Mammary epithelial cell (primary cell): ENCODE measurements at regions of chr13 and their contacts with region 1.

Region 1: DNA sequence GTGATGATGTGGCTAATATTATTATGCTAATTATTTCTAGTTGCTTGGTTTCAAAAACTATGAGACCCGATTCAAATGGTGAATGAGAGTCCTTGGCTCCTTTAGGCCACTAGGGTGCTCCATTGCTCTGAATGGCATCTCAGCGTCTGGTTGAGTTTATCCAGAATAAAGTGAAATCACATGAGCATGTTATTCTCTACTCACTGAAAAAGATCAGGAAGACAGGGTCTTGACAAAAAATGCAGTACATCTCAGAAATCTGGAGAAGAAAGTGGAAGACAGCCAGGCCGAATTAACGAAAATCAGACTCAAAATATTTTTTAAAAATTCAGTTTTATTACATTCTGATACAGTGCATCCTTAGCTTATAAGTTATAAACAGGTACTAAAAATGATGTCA is 516.2 kb downstream of the MYO16 start:
- DNase-seq: peak; percentile 72
- H3K4me3 ChIP-seq: no peak overlapping the region
- H3K27ac ChIP-seq: peak overlapping the region; percentile 99
- H3K4me1 ChIP-seq: peaks cover 38% of the 10 kb centered on the region
- H3K27me3 ChIP-seq: no peaks in the 10 kb centered on the region
- CTCF ChIP-seq: peak; percentile 93 to 98

Region 2: GRCh38 chr13:108915634-108916512 is 229.8 kb before region 1 on chr13:
- CTCF ChIA-PET with region 1: no interaction called
- dilution Hi-C with region 1: no loop called
- in situ Hi-C with region 1: no loop called
- intact Hi-C with region 1: loop called (anchors 2 kb)
- DNase-seq: peak; percentile 94
- H3K4me3 ChIP-seq: no peak overlapping the region
- H3K27ac ChIP-seq: peak overlapping the region; percentile 50
- H3K4me1 ChIP-seq: peaks cover 25% of the 10 kb centered on the region
- H3K27me3 ChIP-seq: no peaks in the 10 kb centered on the region
- CTCF ChIP-seq: no peak

Region 3: GRCh38 chr13:109344552-109345157 is 199.0 kb after region 1 on chr13:
- CTCF ChIA-PET with region 1: no interaction called
- dilution Hi-C with region 1: no loop called
- in situ Hi-C with region 1: no loop called
- intact Hi-C with region 1: loop called (anchors 5 kb)
- DNase-seq: peak; percentile 27
- H3K4me3 ChIP-seq: no peak overlapping the region
- H3K27ac ChIP-seq: no peak overlapping the region
- H3K4me1 ChIP-seq: peaks cover 26% of the 10 kb centered on the region
- H3K27me3 ChIP-seq: no peaks in the 10 kb centered on the region
- CTCF ChIP-seq: no peak

Region 4: DNA sequence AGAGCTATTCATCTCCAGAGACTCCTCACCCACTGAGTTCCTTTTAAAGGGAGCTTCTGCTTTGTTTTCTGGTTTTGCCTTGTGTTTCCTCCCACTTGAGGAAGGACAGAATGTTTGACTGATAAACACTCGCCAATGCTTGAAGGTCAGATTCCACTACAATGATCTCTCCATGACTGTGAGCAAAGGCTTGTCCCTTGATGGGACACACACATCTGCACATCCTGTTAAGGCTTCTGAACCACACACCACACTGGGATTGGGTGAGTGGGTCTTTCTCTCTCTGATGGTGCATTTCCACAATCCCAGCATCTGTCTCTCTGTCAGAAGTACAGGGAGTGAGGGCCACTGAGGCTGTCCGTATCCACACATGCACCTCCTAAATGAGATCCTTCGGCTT is 395.4 kb after region 1 on chr13:
- CTCF ChIA-PET with region 1: no interaction called
- dilution Hi-C with region 1: no loop called
- in situ Hi-C with region 1: no loop called
- intact Hi-C with region 1: no loop called
- DNase-seq: no peak
- H3K4me3 ChIP-seq: no peak overlapping the region
- H3K27ac ChIP-seq: no peak overlapping the region
- H3K4me1 ChIP-seq: no peaks in the 10 kb centered on the region
- H3K27me3 ChIP-seq: peaks cover 5% of the 10 kb centered on the region
- CTCF ChIP-seq: no peak

Region 5: DNA sequence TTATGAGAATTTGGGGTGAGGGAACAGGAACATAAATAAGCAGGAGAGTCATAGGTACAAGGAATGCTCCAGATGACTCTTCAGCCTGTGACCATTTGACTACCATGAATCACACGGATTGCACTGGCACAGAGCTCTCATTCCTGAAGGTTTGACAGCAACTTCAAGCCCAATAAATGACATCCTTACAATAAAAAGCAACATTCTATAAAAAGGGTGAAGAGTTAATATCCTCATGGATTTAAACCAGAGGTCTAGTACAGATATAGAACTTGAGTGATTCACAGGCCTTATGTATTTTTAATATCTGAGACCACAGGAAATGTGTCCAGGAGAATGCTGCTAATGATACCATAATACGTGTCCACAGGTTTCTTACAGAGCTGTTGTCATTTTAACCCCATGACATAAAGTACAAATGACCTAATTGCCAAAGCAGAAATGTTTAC is 482.6 kb after region 1 on chr13:
- CTCF ChIA-PET with region 1: no interaction called
- dilution Hi-C with region 1: no loop called
- in situ Hi-C with region 1: no loop called
- intact Hi-C with region 1: loop called (anchors 10 kb)
- DNase-seq: peak; percentile 74
- H3K4me3 ChIP-seq: no peak overlapping the region
- H3K27ac ChIP-seq: no peak overlapping the region
- H3K4me1 ChIP-seq: peaks cover 5% of the 10 kb centered on the region
- H3K27me3 ChIP-seq: no peaks in the 10 kb centered on the region
- CTCF ChIP-seq: no peak

Region 6: DNA sequence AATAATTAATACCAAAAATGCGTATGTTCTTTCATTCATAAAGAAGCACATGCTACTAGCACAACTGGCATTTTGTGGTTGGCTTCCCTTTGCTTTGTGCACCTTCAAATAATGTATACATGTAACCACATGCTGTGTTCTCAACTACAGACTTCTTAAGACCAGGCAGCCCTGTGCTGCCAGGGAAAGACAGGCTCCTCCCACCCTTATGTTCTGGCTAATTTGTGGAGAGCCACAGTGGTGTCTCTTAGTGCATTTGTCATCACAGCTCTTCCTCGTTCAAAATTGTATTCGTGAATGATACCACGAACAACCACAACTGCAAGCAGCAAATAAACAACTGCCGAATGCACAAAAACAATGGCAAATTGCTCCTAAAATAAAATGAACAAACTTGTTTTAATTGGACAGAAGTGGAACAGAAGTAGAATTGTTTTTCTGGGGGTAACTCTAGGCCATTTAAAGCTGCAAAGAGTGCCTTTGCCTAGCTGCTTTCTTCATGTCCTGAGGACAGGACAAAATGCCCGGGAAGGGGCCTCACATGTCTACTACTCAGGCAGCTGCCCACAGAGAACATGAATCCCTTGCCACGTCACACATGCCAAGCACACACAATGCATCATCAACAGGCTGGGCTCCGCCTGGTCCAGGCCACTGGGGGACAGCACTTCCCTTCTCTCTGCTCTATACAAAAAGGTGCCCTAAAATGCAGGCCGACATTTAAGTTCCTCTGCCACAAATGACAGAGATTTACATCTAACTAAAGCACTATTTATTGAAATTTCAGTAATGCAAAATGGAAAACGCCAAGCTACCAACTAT is 619.0 kb after region 1 on chr13:
- CTCF ChIA-PET with region 1: no interaction called
- dilution Hi-C with region 1: no loop called
- in situ Hi-C with region 1: loop called in 1 of 2 experiments (anchors 25 kb)
- intact Hi-C with region 1: loop called (anchors 5 kb)
- DNase-seq: peak; percentile 59
- H3K4me3 ChIP-seq: no peak overlapping the region
- H3K27ac ChIP-seq: no peak overlapping the region
- H3K4me1 ChIP-seq: peaks cover 45% of the 10 kb centered on the region
- H3K27me3 ChIP-seq: no peaks in the 10 kb centered on the region
- CTCF ChIP-seq: peak; percentile 25 to 37

Region 7: GRCh38 chr13:110108347-110109174 is 962.9 kb after region 1 on chr13:
- CTCF ChIA-PET with region 1: no interaction called
- dilution Hi-C with region 1: no loop called
- in situ Hi-C with region 1: loop called (anchors 5 to 10 kb)
- intact Hi-C with region 1: loop called (anchors 1 kb)
- DNase-seq: peak; percentile 78
- H3K4me3 ChIP-seq: no peak overlapping the region
- H3K27ac ChIP-seq: no peak overlapping the region
- H3K4me1 ChIP-seq: peaks cover 29% of the 10 kb centered on the region
- H3K27me3 ChIP-seq: no peaks in the 10 kb centered on the region
- CTCF ChIP-seq: peak; percentile 89 to 93